MCF 10A (cell line): ENCODE measurements at regions of chr6 and their contacts with region 1.

Region 1: DNA sequence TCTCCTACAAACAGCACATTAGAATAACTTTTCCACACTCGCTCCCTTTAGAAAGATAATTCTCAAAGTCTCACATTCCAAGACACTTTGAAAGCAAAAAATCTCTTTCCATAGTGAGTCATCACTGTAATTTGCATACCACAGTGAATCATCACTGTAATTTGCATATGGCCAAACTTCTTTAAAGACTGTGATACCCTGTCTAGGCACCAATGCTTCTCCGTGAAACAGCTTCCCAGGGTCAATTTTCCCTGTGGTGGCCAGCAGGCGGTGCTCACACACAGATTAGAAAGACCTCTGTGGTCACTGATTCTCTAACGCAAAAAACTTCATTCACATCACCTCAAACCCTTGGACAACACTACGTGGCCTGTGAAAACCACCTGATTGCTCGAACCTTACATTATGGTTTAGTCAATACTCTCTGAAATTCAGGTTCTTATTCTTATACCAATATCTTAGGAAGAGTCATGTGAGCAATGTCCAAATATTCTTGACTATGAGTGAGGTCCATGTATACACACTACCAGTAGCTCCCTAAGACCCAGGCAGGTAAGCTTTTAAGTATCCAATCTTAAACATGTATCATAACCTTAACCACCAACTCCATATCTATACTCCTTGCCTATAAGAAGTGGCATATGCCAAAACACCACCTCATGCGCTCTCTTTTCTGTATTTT is 78.5 kb upstream of the PHACTR1 start:
- DNase-seq: peak; percentile 82
- H3K4me3 Mint-ChIP-seq: no peak overlapping the region
- H3K27ac Mint-ChIP-seq: no peak overlapping the region
- H3K4me1 Mint-ChIP-seq: peaks cover 6% of the 10 kb centered on the region
- H3K27me3 Mint-ChIP-seq: peaks cover 11% of the 10 kb centered on the region
- CTCF ChIP-seq: peak; percentile 67

Region 2: DNA sequence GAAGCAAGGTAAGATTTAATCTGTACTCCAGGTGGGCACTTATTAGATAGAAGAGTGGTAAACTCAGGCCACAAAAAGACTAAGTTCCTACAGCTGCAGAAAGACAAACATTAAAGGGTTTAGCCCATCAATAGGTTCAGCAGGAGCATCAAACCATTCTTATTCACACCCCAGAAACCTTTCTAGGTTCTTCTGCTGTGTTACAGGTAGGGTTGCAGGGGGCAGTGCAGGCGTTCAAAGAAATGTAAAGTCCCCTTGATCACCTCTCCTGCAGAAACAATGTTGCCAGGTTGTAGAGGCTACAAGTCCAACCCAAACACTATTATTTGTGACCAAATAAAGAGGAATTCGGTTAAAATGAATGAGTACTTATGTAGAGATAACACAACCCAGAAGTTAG is 110.3 kb after region 1 on chr6:
- CTCF ChIA-PET with region 1: no interaction called
- POLR2A ChIA-PET with region 1: no interaction called
- intact Hi-C with region 1: no loop called
- DNase-seq: no peak
- H3K4me3 Mint-ChIP-seq: no peak overlapping the region
- H3K27ac Mint-ChIP-seq: no peak overlapping the region
- H3K4me1 Mint-ChIP-seq: no peaks in the 10 kb centered on the region
- H3K27me3 Mint-ChIP-seq: peaks cover 52% of the 10 kb centered on the region
- CTCF ChIP-seq: no peak

Region 3: DNA sequence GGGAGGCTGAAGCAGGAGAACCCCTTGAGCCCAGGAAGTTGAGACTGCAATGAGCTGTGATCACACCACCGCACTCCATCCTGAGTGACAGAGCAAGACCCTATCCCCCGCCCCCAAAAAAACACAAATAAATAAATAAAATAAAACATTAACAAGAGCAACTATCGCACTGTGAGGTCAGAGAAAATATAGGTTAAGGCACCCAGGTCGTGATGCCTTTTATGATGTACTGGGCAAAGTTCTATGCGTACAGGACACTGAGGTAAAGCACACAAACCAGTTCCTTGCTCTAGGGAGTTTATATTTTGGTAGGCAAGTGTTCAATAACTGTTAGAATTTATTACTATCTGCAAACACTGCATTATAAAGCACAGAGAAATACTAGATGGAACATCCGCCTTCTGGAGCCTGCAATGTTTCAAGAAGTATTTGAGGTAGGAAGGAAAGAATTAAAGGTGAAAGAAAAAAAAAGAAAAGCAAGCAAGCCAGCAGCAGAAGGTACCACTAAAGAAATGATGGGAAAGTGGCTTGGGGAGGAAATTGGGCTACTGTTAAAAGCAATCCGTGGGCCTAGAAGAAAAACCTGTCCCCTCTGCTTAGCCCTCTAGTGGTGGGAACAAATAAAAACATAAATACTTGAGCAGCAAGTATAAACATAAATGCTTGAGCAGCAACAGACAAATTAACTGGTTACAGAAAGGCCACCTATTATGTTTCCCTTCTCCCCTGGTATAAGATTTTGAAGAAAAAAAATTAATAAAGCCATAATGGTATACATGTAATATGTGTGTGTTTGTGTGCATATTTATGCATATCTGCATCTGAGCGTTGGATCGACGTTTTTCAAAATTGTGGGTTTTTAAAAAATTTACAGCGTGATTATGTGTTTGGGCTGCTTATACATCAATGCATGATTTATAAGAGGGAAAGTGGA is 206.5 kb after region 1 on chr6:
- CTCF ChIA-PET with region 1: interaction called, 3 read pairs
- POLR2A ChIA-PET with region 1: no interaction called
- intact Hi-C with region 1: loop called (anchors 2 kb)
- DNase-seq: peak; percentile 37
- H3K4me3 Mint-ChIP-seq: no peak overlapping the region
- H3K27ac Mint-ChIP-seq: no peak overlapping the region
- H3K4me1 Mint-ChIP-seq: no peaks in the 10 kb centered on the region
- H3K27me3 Mint-ChIP-seq: peaks cover 21% of the 10 kb centered on the region
- CTCF ChIP-seq: peak; percentile 55

Region 4: GRCh38 chr6:12890171-12890790 is 252.2 kb after region 1 on chr6:
- CTCF ChIA-PET with region 1: interaction called, 25 read pairs
- POLR2A ChIA-PET with region 1: interaction called, 4 read pairs
- intact Hi-C with region 1: loop called (anchors 1 kb)
- DNase-seq: peak; percentile 13
- H3K4me3 Mint-ChIP-seq: no peak overlapping the region
- H3K27ac Mint-ChIP-seq: no peak overlapping the region
- H3K4me1 Mint-ChIP-seq: no peaks in the 10 kb centered on the region
- H3K27me3 Mint-ChIP-seq: peaks cover 39% of the 10 kb centered on the region
- CTCF ChIP-seq: peak; percentile 34